ENCODE measurements at regions of chr1 and their contacts with region 1.

Region 1: DNA sequence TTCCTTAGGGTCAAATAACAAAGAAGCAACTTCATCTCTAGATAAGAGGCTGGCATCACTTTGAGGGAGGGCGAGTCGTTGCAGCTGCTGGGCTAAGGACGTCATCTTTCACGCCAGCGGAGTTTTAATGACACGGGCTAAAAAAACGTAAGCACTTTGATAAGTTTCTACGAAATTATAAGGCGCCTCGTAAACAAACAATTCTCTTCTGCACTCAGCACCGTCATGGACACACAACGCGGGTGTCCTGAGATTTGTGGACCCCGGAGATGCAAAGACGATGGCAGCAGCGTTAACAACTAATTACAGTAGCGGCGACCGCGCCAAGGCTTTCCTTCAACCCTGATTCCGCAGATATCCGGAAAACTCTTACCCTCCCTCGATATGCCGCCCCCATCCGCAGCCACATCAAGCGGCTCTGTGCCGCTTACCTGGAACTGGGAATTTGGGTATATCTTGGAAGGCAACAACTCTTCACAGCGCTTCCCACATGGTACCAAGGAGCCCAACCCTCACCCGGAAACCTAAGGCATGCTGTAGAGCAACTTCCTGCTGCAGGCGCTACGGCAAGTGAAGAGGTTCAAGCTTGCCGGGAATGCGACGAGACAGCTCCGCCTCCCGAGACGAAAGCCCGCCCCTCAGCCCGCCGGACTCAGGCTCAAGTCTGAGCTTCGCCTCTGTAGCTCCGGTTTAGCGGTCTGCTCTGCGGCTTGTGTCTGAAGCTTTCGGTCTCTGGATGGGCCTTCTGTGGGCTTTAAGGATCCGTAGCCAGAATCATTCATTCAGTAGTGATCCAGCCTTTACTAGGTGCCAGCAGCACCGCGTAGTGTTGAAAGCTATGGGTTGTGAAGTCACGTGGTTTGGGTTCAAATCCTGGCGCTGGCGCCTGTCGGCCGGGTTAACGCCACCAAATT is at the start of gene HEATR1:
- DNase-seq: peak; percentile 87
- ATAC-seq: peak; percentile 98
- H3K4me3 ChIP-seq: peak within 1 kb of the TSS; percentile 80 to 98
- H3K27ac ChIP-seq: peak within 1 kb of the TSS; percentile 87
- H3K4me1 ChIP-seq: peaks cover 8% of the 10 kb centered on the region; the same call in 1 of the 2 replicates
- H3K27me3 ChIP-seq: no peaks in the 10 kb centered on the region
- CTCF ChIP-seq: no peak
- total RNA-seq, gene HEATR1: 66.5 TPM

Region 2: GRCh38 chr1:236465959-236466303 is 138.3 kb before region 1 on chr1:
- CTCF ChIA-PET with region 1: no interaction called
- POLR2A ChIA-PET with region 1: interaction called, 11 read pairs
- in situ Hi-C with region 1: no loop called
- intact Hi-C with region 1: no loop called
- DNase-seq: no peak
- ATAC-seq: no peak
- H3K4me3 ChIP-seq: no peak overlapping the region
- H3K27ac ChIP-seq: peak overlapping the region; percentile 13; the same call in 1 of the 2 replicates
- H3K4me1 ChIP-seq: peaks cover 9% of the 10 kb centered on the region
- H3K27me3 ChIP-seq: no peaks in the 10 kb centered on the region
- CTCF ChIP-seq: no peak

Region 3: DNA sequence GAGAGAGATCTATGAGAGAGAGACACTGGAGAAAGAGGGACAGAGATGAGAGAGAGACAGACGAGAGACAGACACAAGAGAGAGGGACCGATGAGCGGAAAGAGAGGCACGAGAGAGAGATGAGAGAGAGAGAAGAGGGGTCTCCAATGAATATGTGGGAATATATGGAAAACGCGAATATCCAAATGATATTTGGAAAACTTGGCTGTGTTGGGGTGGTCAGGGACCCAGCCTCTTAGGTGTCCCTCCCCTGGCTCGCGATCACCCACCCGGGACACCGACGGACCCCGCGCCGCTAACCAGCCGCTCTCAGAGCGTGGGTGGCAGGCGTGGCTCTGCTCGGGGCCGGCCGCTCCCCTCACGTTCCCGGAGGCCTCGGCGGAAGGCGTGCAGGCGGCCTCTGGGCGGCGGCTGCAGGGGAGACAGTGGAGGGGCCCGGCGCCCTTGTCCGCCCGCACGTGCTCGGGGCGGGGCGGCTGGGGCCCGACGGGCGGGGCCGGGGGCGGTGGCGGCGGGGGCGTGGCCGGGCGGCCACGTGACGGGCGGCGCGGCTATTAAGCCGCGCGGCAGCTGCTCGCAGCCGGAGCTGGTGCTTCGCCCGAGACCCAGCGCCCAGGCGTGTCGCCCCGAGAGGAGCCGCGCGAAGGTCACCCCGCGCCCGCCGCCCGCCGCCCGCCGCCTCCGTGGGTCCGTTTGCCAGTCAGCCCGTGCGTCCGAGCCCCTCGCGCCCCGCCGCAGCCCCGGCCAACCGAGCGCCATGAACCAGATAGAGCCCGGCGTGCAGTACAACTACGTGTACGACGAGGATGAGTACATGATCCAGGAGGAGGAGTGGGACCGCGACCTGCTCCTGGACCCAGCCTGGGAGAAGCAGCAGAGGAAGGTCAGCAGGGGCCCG is 81.9 kb after region 1 on chr1 and contains the start of gene ACTN2:
- CTCF ChIA-PET with region 1: no interaction called
- POLR2A ChIA-PET with region 1: no interaction called
- in situ Hi-C with region 1: no loop called
- intact Hi-C with region 1: loop called (anchors 5 kb)
- DNase-seq: no peak
- ATAC-seq: peak; percentile 82
- H3K4me3 ChIP-seq: peak within 1 kb of the TSS; percentile 32 to 35
- H3K27ac ChIP-seq: no peak within 1 kb of the TSS
- H3K4me1 ChIP-seq: no peaks in the 10 kb centered on the region
- H3K27me3 ChIP-seq: peaks cover 7% of the 10 kb centered on the region; the same call in 1 of the 2 replicates
- CTCF ChIP-seq: no peak
- total RNA-seq, gene ACTN2: 0.49 TPM

Region 4: GRCh38 chr1:236868625-236869467 is 264.6 kb after region 1 on chr1:
- CTCF ChIA-PET with region 1: no interaction called
- POLR2A ChIA-PET with region 1: no interaction called
- in situ Hi-C with region 1: no loop called
- intact Hi-C with region 1: loop called (anchors 1 kb)
- DNase-seq: peak; percentile 64
- ATAC-seq: peak; percentile 96
- H3K4me3 ChIP-seq: no peak overlapping the region
- H3K27ac ChIP-seq: no peak overlapping the region
- H3K4me1 ChIP-seq: no peaks in the 10 kb centered on the region
- H3K27me3 ChIP-seq: no peaks in the 10 kb centered on the region
- CTCF ChIP-seq: peak; percentile 95

Region 5: DNA sequence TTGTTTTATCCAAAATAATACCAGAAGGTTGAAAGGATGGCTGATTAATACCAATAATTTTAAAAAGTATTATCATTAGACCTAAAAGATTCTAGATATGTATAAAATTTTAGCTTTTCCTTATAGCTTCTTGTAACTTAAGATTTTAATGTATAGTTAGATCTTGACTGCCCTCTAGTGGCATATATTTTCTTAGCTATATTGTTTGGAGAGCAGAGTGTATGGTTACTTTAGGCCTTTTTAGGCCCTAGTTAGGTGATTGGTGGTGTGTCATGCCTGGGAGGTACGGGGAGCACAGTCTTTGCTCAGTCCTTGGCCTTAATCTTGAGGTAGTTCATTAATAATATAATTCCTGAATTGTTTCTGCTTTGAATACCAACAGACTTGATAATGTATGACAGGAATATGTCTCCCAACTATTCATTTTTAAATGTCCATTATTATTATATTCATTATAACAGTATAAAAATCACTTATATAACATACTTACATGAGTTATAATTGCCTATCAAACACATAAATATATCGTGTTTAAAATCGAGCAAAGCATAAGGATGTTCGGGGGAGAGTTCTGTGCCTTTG is 958.1 kb after region 1 on chr1:
- CTCF ChIA-PET with region 1: interaction called, 14 read pairs
- POLR2A ChIA-PET with region 1: no interaction called
- in situ Hi-C with region 1: no loop called
- intact Hi-C with region 1: no loop called
- DNase-seq: peak; percentile 32
- ATAC-seq: peak; percentile 86
- H3K4me3 ChIP-seq: no peak overlapping the region
- H3K27ac ChIP-seq: no peak overlapping the region
- H3K4me1 ChIP-seq: no peaks in the 10 kb centered on the region
- H3K27me3 ChIP-seq: no peaks in the 10 kb centered on the region
- CTCF ChIP-seq: peak; percentile 68